ENCODE measurements at regions of chr11 and their contacts with region 1.

Region 1: DNA sequence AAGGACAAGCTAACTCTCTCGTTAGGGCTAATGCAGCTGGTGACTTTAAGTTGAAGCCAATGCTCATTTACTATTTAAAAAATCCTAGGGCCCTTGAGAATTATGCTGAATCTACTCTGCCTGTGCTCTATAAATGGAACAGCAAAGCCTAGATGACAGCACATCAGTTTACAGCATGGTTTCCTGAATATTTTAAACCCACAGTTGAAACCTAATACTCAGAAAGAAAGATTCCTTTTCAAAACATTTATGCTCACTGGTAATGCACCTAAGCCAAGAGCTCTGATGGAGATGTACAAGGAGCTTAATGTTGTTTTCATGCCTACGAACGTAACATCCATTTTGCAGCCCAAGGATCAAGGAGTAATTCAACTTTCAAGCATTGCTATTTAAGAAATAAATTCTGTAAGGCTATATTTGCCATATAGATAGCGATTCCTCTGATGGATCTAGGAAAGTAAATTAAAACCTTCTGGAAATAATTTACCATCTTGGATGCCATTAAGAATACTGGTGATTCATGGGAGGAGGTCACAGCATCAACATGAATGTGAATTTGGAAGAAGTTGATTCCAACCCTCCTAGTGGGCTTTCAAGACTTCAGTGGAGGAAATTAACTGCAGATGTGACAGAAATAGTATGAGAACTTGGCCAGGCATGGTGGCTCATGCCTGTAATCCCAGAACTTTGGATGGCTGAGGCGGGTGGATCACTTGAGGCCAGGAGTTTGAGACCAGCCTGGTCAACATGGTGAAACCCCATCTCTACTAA is 14.5 kb downstream of the XNDC1N start:
- DNase-seq: no peak
- H3K4me3 ChIP-seq: no peak overlapping the region
- H3K27ac ChIP-seq: no peak overlapping the region
- H3K4me1 ChIP-seq: no peaks in the 10 kb centered on the region
- H3K27me3 ChIP-seq: no peaks in the 10 kb centered on the region
- CTCF ChIP-seq: no peak
- EP300 ChIP-seq: no peak
- POLR2A ChIP-seq: no peak

Region 2: GRCh38 chr11:71946144-71946571 is 32.2 kb after region 1 on chr11:
- in situ Hi-C with region 1: no loop called
- intact Hi-C with region 1: loop called (anchors 1 kb)
- DNase-seq: no peak
- H3K4me3 ChIP-seq: no peak overlapping the region
- H3K27ac ChIP-seq: no peak overlapping the region
- H3K4me1 ChIP-seq: peaks cover 11 to 34% (median 21%) of the 10 kb centered on the region in 4 donors
- H3K27me3 ChIP-seq: no peaks in the 10 kb centered on the region
- CTCF ChIP-seq: no peak
- EP300 ChIP-seq: no peak
- POLR2A ChIP-seq: no peak

Region 3: DNA sequence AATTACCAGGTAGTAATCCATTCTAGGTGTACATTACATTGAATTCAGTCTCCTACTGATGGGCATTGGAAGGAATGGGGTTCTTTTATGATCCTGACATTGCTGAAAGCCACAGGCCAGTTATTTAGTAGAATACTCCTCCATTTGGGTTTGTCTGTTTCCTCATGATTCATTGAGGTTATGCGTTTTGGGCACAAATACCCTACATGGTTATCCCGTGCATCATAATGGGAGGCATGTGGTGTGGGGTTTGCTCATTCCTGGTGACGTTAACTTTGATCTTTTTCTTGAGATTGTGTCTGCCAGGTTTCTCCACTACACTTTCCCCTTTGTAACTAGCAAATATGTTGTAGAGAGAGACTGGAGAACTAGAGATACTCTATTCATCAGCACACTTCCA is 227.1 kb after region 1 on chr11:
- in situ Hi-C with region 1: no loop called
- intact Hi-C with region 1: no loop called
- DNase-seq: no peak
- H3K4me3 ChIP-seq: no peak overlapping the region
- H3K27ac ChIP-seq: no peak overlapping the region
- H3K4me1 ChIP-seq: peaks cover 0 to 6% (median 0%) of the 10 kb centered on the region in 4 donors
- H3K27me3 ChIP-seq: no peaks in the 10 kb centered on the region
- CTCF ChIP-seq: no peak
- EP300 ChIP-seq: no peak
- POLR2A ChIP-seq: no peak

Measured in transverse colon (tissue), 4 donors.